Naive thymus-derived CD4-positive, alpha-beta T cell (primary cell): ENCODE measurements at regions of chr14 and their contacts with region 1.

Region 1: DNA sequence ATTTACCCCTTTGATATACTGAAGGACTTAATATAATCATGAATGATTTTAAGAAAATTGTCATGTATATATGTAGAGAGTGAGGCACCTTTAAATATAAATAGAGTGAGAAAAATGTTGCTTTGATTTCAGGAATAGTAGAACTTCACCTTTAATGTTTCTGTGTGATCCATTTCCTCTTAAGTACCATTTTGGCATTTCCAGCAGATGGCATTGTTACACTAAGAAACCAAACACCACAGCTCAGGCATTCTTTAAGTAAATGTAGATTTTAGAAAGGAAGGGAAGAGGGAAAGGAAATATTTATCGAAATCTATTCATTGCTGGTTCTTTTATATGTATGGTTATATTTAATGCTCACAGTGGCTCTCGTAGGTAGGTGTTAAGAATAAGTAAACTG is 556.7 kb upstream of the FBXO33 start:
- DNase-seq: peak in 3 of 9 donors; percentile 0 to 20 (median 3)
- ATAC-seq: no peak
- H3K4me3 ChIP-seq: no peak overlapping the region
- H3K4me3 Mint-ChIP-seq: no peak overlapping the region
- H3K27ac ChIP-seq: no peak overlapping the region
- H3K27ac Mint-ChIP-seq: no peak overlapping the region
- H3K4me1 ChIP-seq: no peaks in the 10 kb centered on the region
- H3K4me1 Mint-ChIP-seq: peaks cover 0 to 3% (median 0%) of the 10 kb centered on the region in 7 donors
- H3K27me3 ChIP-seq: no peaks in the 10 kb centered on the region
- H3K27me3 Mint-ChIP-seq: no peaks in the 10 kb centered on the region

Region 2: GRCh38 chr14:39581474-39581873 is 407.5 kb before region 1 on chr14:
- CTCF ChIA-PET with region 1: no interaction called
- POLR2A ChIA-PET with region 1: no interaction called
- intact Hi-C with region 1: loop called in 1 of 2 experiments (anchors 5 kb)
- DNase-seq: peak in 3 of 9 donors; percentile 2 to 8 (median 3)
- ATAC-seq: no peak
- H3K4me3 ChIP-seq: no peak overlapping the region
- H3K4me3 Mint-ChIP-seq: no peak overlapping the region
- H3K27ac ChIP-seq: no peak overlapping the region
- H3K27ac Mint-ChIP-seq: no peak overlapping the region
- H3K4me1 ChIP-seq: no peaks in the 10 kb centered on the region
- H3K4me1 Mint-ChIP-seq: peaks cover 0 to 5% (median 0%) of the 10 kb centered on the region in 7 donors
- H3K27me3 ChIP-seq: no peaks in the 10 kb centered on the region
- H3K27me3 Mint-ChIP-seq: no peaks in the 10 kb centered on the region

Region 3: GRCh38 chr14:39967885-39968284 is 21.1 kb before region 1 on chr14:
- CTCF ChIA-PET with region 1: no interaction called
- POLR2A ChIA-PET with region 1: no interaction called
- intact Hi-C with region 1: no loop called
- DNase-seq: no peak
- ATAC-seq: no peak
- H3K4me3 ChIP-seq: no peak overlapping the region
- H3K4me3 Mint-ChIP-seq: no peak overlapping the region
- H3K27ac ChIP-seq: no peak overlapping the region
- H3K27ac Mint-ChIP-seq: no peak overlapping the region
- H3K4me1 ChIP-seq: no peaks in the 10 kb centered on the region
- H3K4me1 Mint-ChIP-seq: no peaks in the 10 kb centered on the region
- H3K27me3 ChIP-seq: no peaks in the 10 kb centered on the region
- H3K27me3 Mint-ChIP-seq: no peaks in the 10 kb centered on the region

Region 4: GRCh38 chr14:40452674-40453073 is 463.7 kb after region 1 on chr14:
- CTCF ChIA-PET with region 1: no interaction called
- POLR2A ChIA-PET with region 1: no interaction called
- intact Hi-C with region 1: no loop called
- DNase-seq: no peak
- ATAC-seq: no peak
- H3K4me3 ChIP-seq: no peak overlapping the region
- H3K4me3 Mint-ChIP-seq: no peak overlapping the region
- H3K27ac ChIP-seq: no peak overlapping the region
- H3K27ac Mint-ChIP-seq: no peak overlapping the region
- H3K4me1 ChIP-seq: no peaks in the 10 kb centered on the region
- H3K4me1 Mint-ChIP-seq: no peaks in the 10 kb centered on the region
- H3K27me3 ChIP-seq: no peaks in the 10 kb centered on the region
- H3K27me3 Mint-ChIP-seq: no peaks in the 10 kb centered on the region

Region 5: DNA sequence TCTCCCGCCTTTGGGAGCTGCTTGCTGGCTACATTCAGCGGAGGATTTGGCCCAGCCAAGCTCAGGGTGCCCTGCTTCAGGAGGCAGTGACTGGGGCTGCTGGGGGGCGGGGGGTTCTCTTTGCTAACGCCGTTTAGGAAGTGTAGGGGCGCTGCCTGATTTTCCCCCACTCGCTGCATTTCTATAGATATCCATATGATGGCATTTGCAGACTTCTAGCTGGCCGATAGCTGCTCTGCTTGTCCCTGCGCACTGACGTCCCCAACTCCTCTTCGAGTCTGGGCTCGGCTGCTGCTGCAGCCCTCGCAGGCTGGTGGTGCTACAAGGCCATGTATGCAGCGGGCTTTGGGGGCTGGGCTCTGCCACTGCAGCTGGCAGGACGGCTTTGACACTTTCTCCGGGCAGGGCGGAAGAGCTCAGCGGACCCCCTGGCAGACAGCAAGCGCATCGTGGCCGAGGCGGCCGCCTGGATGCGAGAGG is 1620.8 kb after region 1 on chr14:
- CTCF ChIA-PET with region 1: no interaction called
- POLR2A ChIA-PET with region 1: no interaction called
- intact Hi-C with region 1: loop called in 1 of 2 experiments (anchors 10 kb)
- DNase-seq: no peak
- ATAC-seq: no peak
- H3K4me3 ChIP-seq: no peak overlapping the region
- H3K4me3 Mint-ChIP-seq: peak overlapping the region in 3 of 10 donors; percentile 15 to 22 (median 17)
- H3K27ac ChIP-seq: no peak overlapping the region
- H3K27ac Mint-ChIP-seq: no peak overlapping the region
- H3K4me1 ChIP-seq: peaks cover 0 to 19% of the 10 kb centered on the region in 2 donors
- H3K4me1 Mint-ChIP-seq: peaks cover 10 to 45% (median 31%) of the 10 kb centered on the region in 7 donors
- H3K27me3 ChIP-seq: peaks cover 0 to 13% of the 10 kb centered on the region in 2 donors
- H3K27me3 Mint-ChIP-seq: peaks cover 65 to 77% (median 71%) of the 10 kb centered on the region in 5 donors